Head of caudate nucleus (tissue), 42 donors: ENCODE measurements at regions of chr14 and their contacts with region 1.

Region 1: GRCh38 chr14:74762917-74763802 is at the start of gene YLPM1:
- DNase-seq: peak; percentile 81 to 97 (median 92)

Region 2: GRCh38 chr14:74302634-74303577 is 460.3 kb before region 1 on chr14 and contains the start of gene ABCD4:
- intact Hi-C with region 1: loop called (anchors 5 kb)
- DNase-seq: peak; percentile 90 to 99 (median 97)

Region 3: GRCh38 chr14:74595006-74595735 is 168.0 kb before region 1 on chr14:
- intact Hi-C with region 1: no loop called
- DNase-seq: peak in 12 of 42 donors; percentile 13 to 85 (median 56)

Region 4: DNA sequence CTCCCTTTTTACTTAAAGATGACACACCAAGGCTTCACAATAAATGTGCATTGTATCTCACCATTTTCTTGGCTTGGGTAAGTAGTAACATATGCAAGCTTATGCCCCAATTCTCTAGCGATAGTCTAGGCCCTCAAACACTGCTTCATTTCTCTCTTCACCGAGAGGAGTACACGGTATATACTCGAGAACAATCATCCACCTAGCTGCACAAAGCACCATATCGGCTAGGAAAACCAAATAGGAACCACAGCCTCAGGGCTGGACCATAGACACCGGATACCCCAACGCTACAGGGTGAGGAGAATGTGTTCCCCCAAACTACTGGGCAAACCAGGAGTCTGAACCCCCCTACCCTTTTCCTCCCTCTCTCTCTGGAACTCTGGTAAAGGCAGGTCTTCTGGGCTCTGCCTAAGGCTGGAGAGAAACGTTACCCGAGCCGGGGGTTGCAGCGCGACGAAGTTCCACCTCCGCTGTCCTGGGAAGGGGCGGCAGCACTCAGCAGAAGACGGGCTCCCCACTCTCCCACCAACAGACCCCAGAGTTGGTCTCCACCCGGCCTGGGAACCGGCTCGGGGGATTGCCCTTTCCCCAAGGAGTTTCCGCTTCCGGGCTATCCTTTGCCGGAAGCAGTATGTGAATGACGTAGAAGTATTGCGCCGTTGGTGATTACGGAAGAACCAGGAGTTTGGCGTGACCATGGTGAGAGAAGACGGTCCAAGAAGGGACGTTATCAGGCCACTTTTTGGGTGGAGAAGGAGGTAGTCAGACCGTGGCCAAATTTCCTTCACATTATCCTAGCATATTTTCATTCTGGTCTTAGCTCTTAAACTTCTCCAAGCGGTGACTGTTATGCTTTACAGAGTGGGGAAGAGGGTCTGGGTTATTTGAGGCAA is 50.4 kb before region 1 on chr14 and contains the starts of genes AREL1 and FCF1:
- intact Hi-C with region 1: loop called (anchors 10 kb)
- DNase-seq: peak; percentile 76 to 96 (median 89)

Region 5: DNA sequence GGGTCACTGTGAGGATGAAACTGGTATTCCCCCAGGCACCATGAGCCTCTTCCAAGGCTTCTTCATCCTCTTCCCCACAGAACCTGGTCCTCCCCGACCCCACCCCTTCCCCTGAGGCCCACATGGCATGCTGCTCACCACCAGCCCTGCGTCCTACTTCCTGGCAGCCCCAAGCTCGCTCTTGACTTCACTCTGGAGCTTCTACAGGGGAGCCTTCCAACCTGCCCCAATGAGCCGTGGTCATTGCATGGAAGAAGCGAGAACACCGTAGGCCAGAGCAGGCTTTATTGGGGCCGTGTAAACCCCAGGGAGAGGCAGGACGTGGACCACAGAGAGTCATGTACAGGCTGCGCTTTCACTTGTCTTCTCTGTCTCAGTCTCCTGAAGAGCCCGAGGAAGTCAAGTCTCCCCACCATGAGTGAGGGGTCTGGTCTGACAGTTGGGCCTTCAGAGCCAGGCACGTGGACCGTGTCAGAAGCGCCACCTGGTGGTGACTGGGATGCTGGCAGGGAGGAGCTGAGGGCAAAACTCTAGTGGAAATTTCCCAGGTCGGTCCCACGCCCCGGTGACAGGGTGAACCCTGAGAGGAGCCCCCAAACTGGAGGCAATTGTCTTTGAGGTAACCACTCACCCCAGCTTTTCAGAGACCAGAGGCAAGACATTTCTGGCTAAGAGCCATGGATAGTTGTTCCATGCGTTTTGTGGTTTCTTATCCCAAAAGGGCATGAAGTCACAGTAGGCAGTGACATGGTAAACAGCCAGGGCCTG is 142.4 kb after region 1 on chr14:
- intact Hi-C with region 1: no loop called
- DNase-seq: peak; percentile 47 to 93 (median 82)